Endothelial cell of umbilical vein (primary cell): ENCODE measurements at regions of chr9 and their contacts with region 1.

Region 1: DNA sequence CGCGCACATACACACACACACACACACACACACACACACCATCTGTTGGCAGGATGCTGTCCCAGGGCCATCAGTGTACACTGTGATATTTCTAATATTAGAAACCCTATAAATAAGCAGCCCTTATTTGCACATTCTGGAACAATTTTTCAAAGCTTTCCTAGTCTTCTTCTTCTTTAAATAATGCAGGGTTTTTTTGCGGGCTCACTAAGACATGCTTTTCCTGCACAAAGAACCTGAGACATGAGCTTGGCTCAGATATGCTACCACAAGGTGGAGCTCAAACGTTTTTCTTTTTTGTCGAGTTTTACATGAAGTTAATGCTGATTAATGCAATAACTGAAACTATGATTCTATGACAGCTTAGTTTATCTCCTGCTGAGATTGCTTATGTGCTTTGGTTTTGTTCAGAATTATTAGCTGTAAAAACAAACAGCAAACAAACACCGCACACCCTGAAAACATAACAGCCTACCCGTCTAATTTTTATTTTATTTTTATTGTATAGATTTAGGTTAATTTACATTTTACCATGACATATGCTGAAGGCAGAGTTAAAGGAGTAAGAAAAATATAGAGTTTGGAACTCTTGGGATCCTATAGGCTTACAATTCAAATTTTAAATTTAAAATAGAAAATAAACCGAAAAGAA is 95.8 kb downstream of the ALDH1A1 start:
- DNase-seq: peak; percentile 74
- H3K4me3 ChIP-seq: no peak overlapping the region
- H3K27ac ChIP-seq: peak overlapping the region; percentile 35
- H3K4me1 ChIP-seq: peaks cover 16% of the 10 kb centered on the region
- H3K27me3 ChIP-seq: no peaks in the 10 kb centered on the region
- CTCF ChIP-seq: peak; percentile 60 to 63
- POLR2A ChIP-seq: no peak

Region 2: DNA sequence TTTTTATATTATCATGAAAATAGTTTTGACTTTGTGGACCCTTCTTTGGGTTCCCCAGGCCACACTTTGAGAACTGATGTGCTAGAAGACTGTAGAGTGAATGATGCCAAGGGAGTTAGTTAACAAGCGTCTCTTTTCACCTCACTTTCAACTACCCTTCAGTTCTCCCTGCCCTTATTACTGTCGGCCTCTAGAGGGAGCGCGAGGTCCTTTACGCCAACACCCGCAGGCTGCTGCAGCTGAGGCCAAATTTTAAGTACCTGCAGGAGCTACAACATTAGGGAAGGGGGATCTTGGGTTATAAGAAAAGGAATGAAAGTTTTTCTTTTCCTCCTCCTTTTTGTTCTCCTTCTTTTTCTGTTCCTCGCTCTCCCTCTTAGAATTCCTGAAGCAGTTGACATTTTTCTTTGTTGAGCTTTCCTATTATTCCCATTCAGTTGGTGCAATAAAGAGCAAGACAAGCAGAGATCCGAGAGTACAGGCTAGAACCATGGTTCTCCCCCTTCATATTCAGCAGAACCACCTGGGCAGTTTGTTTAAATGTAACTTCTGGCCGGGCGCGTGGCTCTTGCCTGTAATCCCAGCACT is 576.1 kb before region 1 on chr9:
- CTCF ChIA-PET with region 1: interaction called, 13 read pairs
- POLR2A ChIA-PET with region 1: no interaction called
- dilution Hi-C with region 1: no loop called
- intact Hi-C with region 1: no loop called
- DNase-seq: peak; percentile 69
- H3K4me3 ChIP-seq: no peak overlapping the region
- H3K27ac ChIP-seq: no peak overlapping the region
- H3K4me1 ChIP-seq: no peaks in the 10 kb centered on the region
- H3K27me3 ChIP-seq: peaks cover 4 to 5% of the 10 kb centered on the region in 2 experiments
- CTCF ChIP-seq: peak; percentile 85 to 92
- POLR2A ChIP-seq: no peak

Region 3: DNA sequence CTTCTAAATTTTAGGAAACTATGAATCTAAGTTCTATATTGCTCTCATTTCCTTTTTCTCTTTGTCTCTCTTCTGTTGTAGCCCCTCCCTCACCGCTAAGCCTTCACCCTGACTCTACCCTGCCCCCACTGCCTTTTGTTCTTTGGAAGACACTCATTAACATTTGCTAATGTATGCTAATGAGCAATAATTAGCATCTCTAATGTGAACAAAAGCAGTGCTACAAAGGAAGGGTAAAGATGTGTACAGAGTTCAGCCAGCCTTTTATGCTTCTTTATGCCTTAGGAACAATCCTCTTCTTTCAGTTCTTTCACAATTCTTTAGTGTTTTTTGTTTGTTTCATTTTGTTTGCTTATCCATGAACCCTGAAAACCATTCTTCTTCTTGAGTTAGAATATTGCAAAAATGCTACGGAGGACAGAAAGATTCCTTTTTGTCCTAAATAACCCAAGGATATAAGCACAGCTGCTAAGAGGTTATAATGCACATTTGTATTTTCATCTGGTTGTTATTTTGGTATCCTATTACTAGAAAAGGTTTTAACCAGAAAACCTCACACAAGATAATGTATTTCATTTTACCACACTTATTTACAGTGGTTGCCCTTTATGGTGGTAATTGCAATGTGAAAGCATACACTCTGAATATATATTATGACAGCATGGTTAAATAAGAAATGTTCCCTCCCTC is 176.4 kb before region 1 on chr9:
- CTCF ChIA-PET with region 1: no interaction called
- POLR2A ChIA-PET with region 1: no interaction called
- dilution Hi-C with region 1: no loop called
- intact Hi-C with region 1: no loop called
- DNase-seq: no peak
- H3K4me3 ChIP-seq: no peak overlapping the region
- H3K27ac ChIP-seq: no peak overlapping the region
- H3K4me1 ChIP-seq: no peaks in the 10 kb centered on the region
- H3K27me3 ChIP-seq: peaks cover 2% of the 10 kb centered on the region in 2 experiments
- CTCF ChIP-seq: no peak
- POLR2A ChIP-seq: no peak

Region 4: DNA sequence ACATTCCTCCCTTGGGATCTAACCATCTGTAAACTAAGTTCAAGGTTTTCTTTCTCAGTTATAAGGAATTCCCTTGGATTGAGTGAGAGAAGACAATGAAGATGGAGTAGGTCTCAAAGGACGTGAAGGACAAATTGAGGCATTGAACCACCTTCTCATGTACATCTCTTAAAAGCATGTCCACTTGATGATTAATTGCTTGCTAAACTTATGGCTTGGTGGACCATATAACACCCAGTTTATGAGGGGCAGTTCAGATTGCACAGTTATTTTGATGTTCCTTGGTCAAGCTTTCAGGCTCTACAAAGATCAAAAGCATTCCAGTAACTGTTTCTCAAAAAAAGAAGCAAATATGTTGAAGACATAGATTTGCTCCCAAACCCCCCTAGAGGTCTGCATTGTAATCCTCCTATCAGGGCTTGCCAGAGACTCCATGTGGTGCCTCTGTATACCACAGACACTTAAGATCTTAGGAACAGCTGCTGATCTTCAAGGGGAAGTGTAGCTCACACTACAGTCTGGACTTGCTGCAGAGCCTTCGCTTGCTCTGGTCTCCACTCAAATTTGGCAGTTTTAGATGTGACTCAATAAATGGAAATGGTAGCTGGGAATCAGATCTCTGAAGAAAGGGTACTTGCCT is 152.7 kb after region 1 on chr9:
- CTCF ChIA-PET with region 1: interaction called, 10 read pairs
- POLR2A ChIA-PET with region 1: no interaction called
- dilution Hi-C with region 1: no loop called
- intact Hi-C with region 1: no loop called
- DNase-seq: no peak
- H3K4me3 ChIP-seq: no peak overlapping the region
- H3K27ac ChIP-seq: no peak overlapping the region
- H3K4me1 ChIP-seq: peaks cover 38% of the 10 kb centered on the region
- H3K27me3 ChIP-seq: no peaks in the 10 kb centered on the region
- CTCF ChIP-seq: no peak
- POLR2A ChIP-seq: no peak

Region 5: DNA sequence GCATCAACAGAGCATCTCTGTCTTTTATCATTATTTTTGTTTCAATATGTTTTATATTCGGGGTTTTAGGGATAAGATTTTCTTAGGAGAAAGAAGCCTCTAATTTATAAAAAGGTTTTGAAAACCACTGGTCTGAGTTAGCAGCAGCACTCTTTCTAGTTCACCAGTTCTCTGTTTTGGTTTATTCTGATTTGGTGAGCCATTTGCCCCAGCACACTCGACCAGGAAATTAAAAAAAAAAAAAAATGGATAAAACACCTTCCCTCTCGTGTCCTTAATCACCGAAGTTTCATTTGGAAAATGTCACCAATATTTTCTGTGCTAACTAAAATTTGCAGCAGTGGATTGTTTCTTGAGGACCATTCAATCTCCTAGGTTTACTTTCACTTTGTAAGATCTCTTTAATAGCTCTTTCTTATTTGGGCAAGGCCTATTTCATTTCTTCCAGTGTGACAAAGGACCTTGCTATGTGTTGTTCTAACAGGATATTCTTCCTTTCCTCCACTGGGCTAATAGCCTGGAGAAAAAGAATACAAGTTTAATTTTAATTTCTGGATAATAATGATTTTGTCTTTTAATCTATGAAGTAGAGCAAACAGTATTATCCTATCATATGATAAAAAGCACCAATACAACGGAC is 236.8 kb after region 1 on chr9:
- CTCF ChIA-PET with region 1: interaction called, 17 read pairs
- POLR2A ChIA-PET with region 1: no interaction called
- dilution Hi-C with region 1: loop called (anchors 25 kb)
- intact Hi-C with region 1: no loop called
- DNase-seq: peak; percentile 40
- H3K4me3 ChIP-seq: peak overlapping the region in 2 of 3 experiments; percentile 33 to 36
- H3K27ac ChIP-seq: peak overlapping the region; percentile 18
- H3K4me1 ChIP-seq: peaks cover 3% of the 10 kb centered on the region
- H3K27me3 ChIP-seq: no peaks in the 10 kb centered on the region
- CTCF ChIP-seq: no peak
- POLR2A ChIP-seq: no peak

Region 6: DNA sequence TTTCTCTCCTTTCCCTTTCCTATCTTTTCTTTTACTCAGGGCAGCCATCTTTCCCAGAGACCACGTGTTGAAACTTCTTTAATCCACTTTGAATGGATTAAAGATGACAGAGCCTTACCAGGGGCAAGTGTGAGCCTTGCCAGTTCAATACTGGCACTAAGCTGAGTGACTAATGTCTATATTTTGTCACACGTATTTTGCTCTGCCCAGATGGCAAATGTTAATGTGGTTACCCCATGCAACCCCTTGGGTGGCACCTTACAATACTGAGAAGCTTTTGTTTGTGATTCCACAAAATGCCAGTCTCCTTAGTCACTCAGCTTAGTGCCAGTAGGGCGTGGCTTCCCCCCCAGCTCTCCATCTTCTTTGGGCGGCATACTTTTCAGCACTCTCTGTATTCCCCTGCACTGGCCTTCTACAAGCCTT is 319.4 kb after region 1 on chr9:
- CTCF ChIA-PET with region 1: interaction called, 24 read pairs
- POLR2A ChIA-PET with region 1: no interaction called
- dilution Hi-C with region 1: no loop called
- intact Hi-C with region 1: no loop called
- DNase-seq: no peak
- H3K4me3 ChIP-seq: no peak overlapping the region
- H3K27ac ChIP-seq: no peak overlapping the region
- H3K4me1 ChIP-seq: peaks cover 4% of the 10 kb centered on the region
- H3K27me3 ChIP-seq: no peaks in the 10 kb centered on the region
- CTCF ChIP-seq: no peak
- POLR2A ChIP-seq: no peak